CD14-positive monocyte (primary cell): ENCODE measurements at regions of chrX and their contacts with region 1.

Region 1: DNA sequence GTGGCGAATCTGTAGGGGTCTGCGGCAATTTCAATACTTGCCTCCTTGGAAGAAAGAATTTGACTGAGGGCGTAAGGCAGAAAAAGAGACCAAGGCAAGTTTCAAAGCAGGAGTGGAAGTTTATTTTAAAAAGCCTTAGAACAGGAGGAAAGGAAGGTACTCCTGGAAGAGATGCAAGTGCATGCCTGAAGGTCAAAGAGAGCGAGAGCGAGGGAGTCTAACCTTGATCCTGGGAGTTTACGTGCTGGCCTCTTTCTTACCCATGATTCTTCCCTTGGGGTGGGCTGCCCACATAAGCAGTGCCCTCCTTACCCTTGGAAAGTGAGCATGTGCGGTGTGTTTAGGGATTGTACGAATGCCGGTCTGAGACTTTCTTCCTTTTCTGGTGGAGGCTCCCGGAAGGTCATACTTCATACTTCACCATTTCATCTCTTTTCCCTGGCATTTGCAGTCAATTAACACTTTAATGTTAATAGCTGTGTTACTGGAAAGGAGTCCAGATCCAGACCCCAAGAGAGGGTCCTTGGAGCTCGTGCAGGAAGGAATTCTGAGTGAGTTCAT is 40.0 kb downstream of the ARSD start:
- DNase-seq: no peak
- H3K4me3 ChIP-seq: peak overlapping the region; percentile 48 to 99 (median 79)
- H3K4me3 Mint-ChIP-seq: peak overlapping the region; percentile 84 to 90
- H3K27ac ChIP-seq: peak overlapping the region; percentile 53 to 80
- H3K27ac Mint-ChIP-seq: peak overlapping the region; percentile 79 to 93 (median 87)
- H3K4me1 ChIP-seq: peaks cover 23 to 48% of the 10 kb centered on the region in 2 donors
- H3K4me1 Mint-ChIP-seq: peaks cover 42% of the 10 kb centered on the region
- H3K27me3 ChIP-seq: no peaks in the 10 kb centered on the region
- H3K27me3 Mint-ChIP-seq: no peaks in the 10 kb centered on the region
- CTCF ChIP-seq: no peak

Region 2: DNA sequence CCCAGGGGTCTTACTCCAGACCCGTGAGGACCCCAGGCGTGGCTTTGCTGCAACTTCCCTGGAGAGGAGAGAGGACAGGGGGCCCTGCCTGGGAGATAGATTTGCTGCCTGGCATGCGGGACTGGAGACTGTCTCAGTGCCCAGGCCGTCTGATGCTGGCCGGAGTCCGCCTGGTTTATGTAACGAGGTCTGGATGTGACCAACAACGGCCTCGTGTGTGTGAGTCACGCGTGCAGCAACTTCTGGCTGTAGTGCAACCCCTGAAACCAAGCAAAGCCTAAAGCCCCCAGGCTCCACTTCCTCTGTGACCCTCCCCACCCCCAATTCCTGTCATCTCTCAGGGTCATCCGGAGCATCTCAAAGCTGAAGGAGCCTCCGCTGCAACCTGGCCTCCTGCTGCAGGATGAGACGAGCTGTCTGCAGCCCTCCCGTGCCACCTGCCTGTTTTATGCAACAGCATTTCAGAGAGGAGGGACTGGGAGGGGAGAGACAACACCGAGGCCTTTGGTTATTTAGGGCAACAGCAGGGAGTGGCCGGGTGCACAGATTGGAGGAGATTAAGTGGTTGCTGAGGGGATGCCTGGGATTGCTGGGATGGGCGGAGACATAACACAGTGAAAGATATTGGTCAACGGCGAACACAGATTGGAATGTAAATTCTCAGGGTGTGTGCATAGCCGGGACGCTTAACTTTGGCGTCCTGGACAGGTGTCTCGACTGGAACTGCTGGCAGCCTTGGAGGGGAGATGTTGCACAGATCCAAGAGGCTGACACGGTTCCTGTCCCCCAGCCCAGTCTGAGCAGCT is 121.3 kb before region 1 on chrX:
- intact Hi-C with region 1: no loop called
- DNase-seq: peak in 2 of 3 donors; percentile 83 to 95
- H3K4me3 ChIP-seq: no peak overlapping the region
- H3K4me3 Mint-ChIP-seq: no peak overlapping the region
- H3K27ac ChIP-seq: peak overlapping the region in 1 of 2 donors; percentile 61
- H3K27ac Mint-ChIP-seq: peak overlapping the region in 6 of 7 donors; percentile 84 to 92 (median 90)
- H3K4me1 ChIP-seq: peaks cover 0 to 17% of the 10 kb centered on the region in 2 donors
- H3K4me1 Mint-ChIP-seq: peaks cover 23% of the 10 kb centered on the region
- H3K27me3 ChIP-seq: no peaks in the 10 kb centered on the region
- H3K27me3 Mint-ChIP-seq: peaks cover 3 to 9% (median 4%) of the 10 kb centered on the region in 3 donors
- CTCF ChIP-seq: no peak

Region 3: GRCh38 chrX:2934715-2935710 is 45.9 kb after region 1 on chrX:
- intact Hi-C with region 1: loop called in 1 of 2 experiments (anchors 2 kb)
- DNase-seq: peak; percentile 59 to 75 (median 64)
- H3K4me3 ChIP-seq: peak overlapping the region in 1 of 3 experiments; percentile 43
- H3K4me3 Mint-ChIP-seq: peak overlapping the region in 1 of 2 donors; percentile 72
- H3K27ac ChIP-seq: peak overlapping the region in 1 of 2 donors; percentile 64
- H3K27ac Mint-ChIP-seq: peak overlapping the region in 6 of 7 donors; percentile 69 to 86 (median 80)
- H3K4me1 ChIP-seq: peaks cover 31 to 50% of the 10 kb centered on the region in 2 donors
- H3K4me1 Mint-ChIP-seq: peaks cover 45% of the 10 kb centered on the region
- H3K27me3 ChIP-seq: no peaks in the 10 kb centered on the region
- H3K27me3 Mint-ChIP-seq: peaks cover 0 to 3% (median 2%) of the 10 kb centered on the region in 3 donors
- CTCF ChIP-seq: no peak